Heart right ventricle (tissue), 16 donors: ENCODE measurements at regions of chr1 and their contacts with region 1.

Region 1: GRCh38 chr1:203625628-203626019 is 1.0 kb upstream of the ATP2B4 start:
- DNase-seq: peak in 1 of 2 donors; percentile 56
- ATAC-seq: peak; percentile 5 to 58 (median 40)
- H3K4me3 ChIP-seq: peak overlapping the region in 4 of 10 donors; percentile 15 to 84 (median 80)
- H3K27ac ChIP-seq: peak overlapping the region in 9 of 10 donors; percentile 18 to 97 (median 88)
- H3K4me1 ChIP-seq: peaks cover 10 to 50% (median 30%) of the 10 kb centered on the region in 9 donors
- H3K27me3 ChIP-seq: no peaks in the 10 kb centered on the region
- CTCF ChIP-seq: peak in 8 of 9 donors; percentile 32 to 74 (median 52)

Region 2: GRCh38 chr1:203504397-203505250 is 121.0 kb before region 1 on chr1:
- intact Hi-C with region 1: loop called in 8 of 10 experiments (anchors 5 kb)
- DNase-seq: peak; percentile 74 to 88
- ATAC-seq: peak; percentile 30 to 73 (median 54)
- H3K4me3 ChIP-seq: no peak overlapping the region
- H3K27ac ChIP-seq: peak overlapping the region in 2 of 10 donors; percentile 0 to 29
- H3K4me1 ChIP-seq: peaks cover 15 to 50% (median 34%) of the 10 kb centered on the region in 9 donors
- H3K27me3 ChIP-seq: no peaks in the 10 kb centered on the region
- CTCF ChIP-seq: peak; percentile 74 to 94 (median 90)

Region 3: GRCh38 chr1:203558064-203558760 is 67.4 kb before region 1 on chr1:
- intact Hi-C with region 1: loop called in 3 of 10 experiments (anchors 1 to 5 kb)
- DNase-seq: peak; percentile 41 to 60
- ATAC-seq: peak; percentile 35 to 71 (median 58)
- H3K4me3 ChIP-seq: peak overlapping the region in 4 of 10 donors; percentile 14 to 18 (median 16)
- H3K27ac ChIP-seq: peak overlapping the region; percentile 53 to 98 (median 91)
- H3K4me1 ChIP-seq: peaks cover 22 to 71% (median 48%) of the 10 kb centered on the region in 9 donors
- H3K27me3 ChIP-seq: no peaks in the 10 kb centered on the region
- CTCF ChIP-seq: no peak

Region 4: DNA sequence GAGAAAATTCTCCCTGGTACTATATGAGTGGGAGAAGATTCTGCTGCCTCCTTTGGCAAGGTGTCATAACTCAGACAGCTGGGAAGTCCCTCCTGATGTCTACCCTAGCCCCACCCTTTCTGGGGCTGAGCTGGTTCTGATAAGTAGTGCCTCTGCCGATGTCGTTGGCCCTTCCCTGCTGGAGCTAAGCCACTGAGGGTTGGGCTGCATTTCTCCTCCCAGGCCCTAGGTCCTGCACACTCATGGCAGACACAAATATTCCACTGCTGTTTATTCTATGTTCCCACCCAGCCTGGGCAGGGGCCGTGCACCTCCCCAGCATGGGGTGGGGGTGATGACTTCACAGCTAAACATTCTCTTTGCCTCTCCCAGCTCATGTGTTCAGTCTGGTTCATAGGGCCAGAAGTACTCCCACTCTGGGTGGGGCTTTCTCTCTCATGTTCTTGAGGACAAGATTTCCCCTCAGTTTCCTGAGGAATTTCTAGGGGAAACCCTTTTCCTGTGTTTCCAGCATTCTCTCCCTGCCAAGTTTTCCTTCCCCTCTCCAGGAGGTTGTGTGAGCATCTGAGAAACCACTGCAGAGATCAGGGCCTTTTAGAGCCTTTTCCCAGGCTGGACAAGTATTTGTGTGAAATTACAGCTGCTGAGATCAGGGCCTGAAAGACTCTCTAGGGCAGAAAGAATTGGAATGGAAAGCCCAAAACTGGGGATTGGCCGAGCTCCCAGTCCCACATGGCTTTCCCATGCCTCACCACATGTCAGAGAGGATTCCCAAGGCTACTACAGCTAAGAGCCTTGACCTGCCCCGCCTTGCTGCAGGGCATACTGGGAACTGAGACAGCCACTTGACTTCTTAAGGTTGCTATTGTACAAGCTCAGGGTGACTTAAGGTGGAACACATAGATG is 67.2 kb after region 1 on chr1:
- intact Hi-C with region 1: loop called in 9 of 10 experiments (anchors 1 to 5 kb)
- DNase-seq: peak; percentile 75 to 90
- ATAC-seq: peak; percentile 88 to 95 (median 89)
- H3K4me3 ChIP-seq: peak overlapping the region in 1 of 10 donors; percentile 1
- H3K27ac ChIP-seq: peak overlapping the region; percentile 63 to 85 (median 76)
- H3K4me1 ChIP-seq: peaks cover 33 to 96% (median 65%) of the 10 kb centered on the region in 9 donors
- H3K27me3 ChIP-seq: no peaks in the 10 kb centered on the region
- CTCF ChIP-seq: peak in 2 of 9 donors; percentile 6 to 12

Region 5: DNA sequence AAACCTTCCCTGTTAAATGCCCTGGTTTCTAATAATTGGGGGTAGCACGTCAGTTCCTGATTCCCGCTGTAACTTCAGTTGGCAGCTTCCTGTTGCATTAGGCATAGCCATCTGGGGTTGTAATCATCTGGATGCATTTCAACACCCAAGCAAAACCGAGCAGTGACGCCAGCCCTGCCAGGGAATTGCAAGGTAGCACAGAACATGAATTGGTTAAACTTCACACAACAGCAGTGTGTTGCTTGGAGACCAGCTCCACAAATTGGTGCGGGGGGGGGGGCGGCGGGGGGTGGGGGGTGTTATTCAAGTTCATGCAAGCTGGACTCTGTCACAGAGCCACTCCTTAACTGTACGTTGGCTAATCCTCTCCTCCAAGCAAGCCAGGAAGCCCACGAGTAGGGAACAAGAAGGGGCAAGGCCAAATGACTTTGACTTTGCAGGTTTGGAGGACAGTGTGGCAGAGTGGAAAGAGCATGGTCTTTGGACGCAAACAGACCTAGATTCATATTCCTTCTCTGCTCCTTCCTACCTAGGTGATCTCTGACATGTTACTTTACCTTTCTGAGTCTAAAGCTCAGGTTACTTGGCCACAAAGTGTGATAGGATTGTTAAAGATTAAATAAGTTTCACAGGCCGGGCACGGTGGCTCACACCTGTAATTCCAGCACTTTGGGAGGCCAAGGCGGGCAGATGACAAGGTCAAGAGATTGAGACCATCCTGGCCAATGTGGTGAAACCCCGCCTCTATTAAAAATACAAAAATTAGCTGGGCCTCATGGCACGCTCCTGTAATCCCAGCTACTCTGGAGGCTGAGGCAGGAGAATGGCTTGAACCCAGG is 144.1 kb after region 1 on chr1:
- intact Hi-C with region 1: loop called in 1 of 10 experiments (anchors 10 kb)
- DNase-seq: peak; percentile 58 to 79
- ATAC-seq: peak; percentile 71 to 96 (median 88)
- H3K4me3 ChIP-seq: peak overlapping the region in 4 of 10 donors; percentile 13 to 33 (median 18)
- H3K27ac ChIP-seq: peak overlapping the region in 7 of 10 donors; percentile 37 to 68 (median 52)
- H3K4me1 ChIP-seq: peaks cover 0 to 25% (median 6%) of the 10 kb centered on the region in 9 donors
- H3K27me3 ChIP-seq: no peaks in the 10 kb centered on the region
- CTCF ChIP-seq: no peak